Common myeloid progenitor, CD34-positive (primary cell): ENCODE measurements at regions of chr14 and their contacts with region 1.

Region 1: DNA sequence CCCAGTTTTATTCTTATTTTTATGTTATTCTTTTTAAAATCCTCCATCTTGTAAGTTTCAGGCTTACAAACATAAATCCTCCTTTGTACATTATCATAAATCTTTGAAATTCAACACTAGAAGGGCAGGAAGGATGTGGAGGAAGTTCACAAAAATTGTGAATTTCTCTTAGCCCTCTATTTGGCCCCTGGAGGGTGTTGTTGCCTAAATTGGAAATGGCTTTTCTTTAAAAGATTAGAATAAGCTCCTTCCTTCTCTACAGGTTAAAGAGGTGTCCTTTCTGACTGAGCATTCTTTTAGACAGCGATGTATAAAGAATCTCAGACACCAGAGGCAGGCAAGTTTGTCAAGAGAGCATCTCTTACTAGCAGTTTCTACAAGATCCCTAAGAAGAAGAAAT is 391.7 kb upstream of the OR4E1 start:
- DNase-seq: peak in 2 of 3 donors; percentile 32 to 54
- H3K4me3 ChIP-seq: peak overlapping the region in 6 of 7 experiments; percentile 28 to 66 (median 42)
- H3K27ac ChIP-seq: peak overlapping the region; percentile 17 to 64
- H3K4me1 ChIP-seq: peaks cover 11 to 46% (median 27%) of the 10 kb centered on the region in 4 experiments
- H3K27me3 ChIP-seq: no peaks in the 10 kb centered on the region

Region 2: DNA sequence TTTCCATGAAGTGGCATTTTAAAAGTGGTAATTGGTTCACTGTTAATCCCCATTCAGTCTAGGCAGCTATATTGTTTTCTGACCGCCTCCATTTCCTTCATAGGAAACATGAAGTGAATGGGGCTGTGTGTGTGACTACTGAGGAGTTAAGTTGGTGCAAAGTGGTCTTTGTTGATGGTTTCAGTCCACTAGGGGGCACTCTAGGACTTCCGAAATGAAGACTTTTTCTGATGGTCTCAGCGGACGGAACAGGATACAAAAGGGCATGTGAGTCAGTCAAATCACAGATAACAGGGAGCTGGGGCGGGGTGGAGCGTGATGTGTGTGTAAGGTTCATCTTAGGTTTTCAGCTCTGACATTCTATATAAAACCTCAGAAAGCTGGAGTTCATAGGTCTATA is 151.6 kb before region 1 on chr14:
- CTCF ChIA-PET with region 1: no interaction called
- POLR2A ChIA-PET with region 1: no interaction called
- DNase-seq: peak; percentile 93 to 96 (median 95)
- H3K4me3 ChIP-seq: peak overlapping the region in 2 of 7 experiments; percentile 1 to 28
- H3K27ac ChIP-seq: no peak overlapping the region
- H3K4me1 ChIP-seq: peaks cover 15 to 19% (median 17%) of the 10 kb centered on the region in 4 experiments
- H3K27me3 ChIP-seq: no peaks in the 10 kb centered on the region

Region 3: GRCh38 chr14:22047115-22047514 is 18.2 kb before region 1 on chr14:
- CTCF ChIA-PET with region 1: interaction called, 30 read pairs
- POLR2A ChIA-PET with region 1: interaction called, 3 read pairs
- DNase-seq: peak; percentile 64 to 81 (median 78)
- H3K4me3 ChIP-seq: peak overlapping the region in 1 of 7 experiments; percentile 29
- H3K27ac ChIP-seq: no peak overlapping the region
- H3K4me1 ChIP-seq: peaks cover 4 to 33% (median 14%) of the 10 kb centered on the region in 4 experiments
- H3K27me3 ChIP-seq: no peaks in the 10 kb centered on the region

Region 4: GRCh38 chr14:22084393-22085281 is 19.3 kb after region 1 on chr14:
- CTCF ChIA-PET with region 1: interaction called, 17 read pairs
- POLR2A ChIA-PET with region 1: no interaction called
- DNase-seq: peak; percentile 71 to 86 (median 78)
- H3K4me3 ChIP-seq: no peak overlapping the region
- H3K27ac ChIP-seq: no peak overlapping the region
- H3K4me1 ChIP-seq: peaks cover 0 to 10% (median 5%) of the 10 kb centered on the region in 4 experiments
- H3K27me3 ChIP-seq: no peaks in the 10 kb centered on the region